Naive thymus-derived CD4-positive, alpha-beta T cell (primary cell): ENCODE measurements at regions of chr16 and their contacts with region 1.

Region 1: DNA sequence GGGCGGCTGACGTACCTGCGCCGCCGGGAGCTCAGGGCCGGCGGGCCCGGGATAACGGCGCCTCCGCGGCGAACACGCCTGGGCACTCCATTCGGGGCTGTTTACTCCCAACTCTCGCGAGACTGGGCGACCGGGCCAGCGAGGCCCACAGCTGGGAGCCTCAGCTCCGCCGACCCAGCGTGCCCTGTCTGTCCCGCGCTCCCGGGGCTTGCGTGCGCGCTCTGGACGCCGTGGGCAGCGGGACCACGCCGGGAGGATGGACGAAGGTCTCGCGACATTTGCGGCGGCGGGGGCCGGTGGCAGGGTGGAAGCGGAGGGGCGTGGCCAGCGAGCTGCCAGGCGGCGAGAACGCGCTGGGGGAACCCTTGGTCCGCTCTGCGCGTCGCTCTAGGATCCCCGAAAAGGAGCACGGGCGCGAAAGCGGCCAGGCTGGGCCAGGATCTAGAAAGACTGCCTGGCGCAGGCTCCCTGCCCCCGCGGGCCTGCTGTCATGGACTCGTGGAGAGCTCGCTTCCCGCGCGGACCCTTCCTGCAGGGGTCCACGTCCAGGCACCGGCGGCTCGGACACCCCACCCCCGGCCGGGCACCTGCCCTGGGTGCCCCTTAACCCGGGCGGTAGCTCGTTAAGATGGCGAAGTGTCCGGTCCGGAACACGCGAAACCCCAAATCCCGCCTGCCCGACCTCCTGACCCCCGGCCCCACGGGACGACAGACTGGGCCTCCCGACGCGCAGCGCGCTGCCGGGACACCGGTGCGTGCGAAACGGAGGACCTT is at the start of gene MBTPS1:
- DNase-seq: peak; percentile 94 to 99 (median 97)
- ATAC-seq: peak; percentile 92
- H3K4me3 ChIP-seq: peak within 1 kb of the TSS; percentile 99
- H3K4me3 Mint-ChIP-seq: peak within 1 kb of the TSS; percentile 90 to 96 (median 94)
- H3K27ac ChIP-seq: peak within 1 kb of the TSS; percentile 86
- H3K27ac Mint-ChIP-seq: peak within 1 kb of the TSS; percentile 93 to 98 (median 96)
- H3K4me1 ChIP-seq: peaks cover 14 to 18% of the 10 kb centered on the region in 2 donors
- H3K4me1 Mint-ChIP-seq: peaks cover 6 to 36% (median 23%) of the 10 kb centered on the region in 7 donors
- H3K27me3 ChIP-seq: no peaks in the 10 kb centered on the region
- H3K27me3 Mint-ChIP-seq: no peaks in the 10 kb centered on the region
- total RNA-seq, gene MBTPS1: 65.3 to 157 (median 138) TPM

Region 2: DNA sequence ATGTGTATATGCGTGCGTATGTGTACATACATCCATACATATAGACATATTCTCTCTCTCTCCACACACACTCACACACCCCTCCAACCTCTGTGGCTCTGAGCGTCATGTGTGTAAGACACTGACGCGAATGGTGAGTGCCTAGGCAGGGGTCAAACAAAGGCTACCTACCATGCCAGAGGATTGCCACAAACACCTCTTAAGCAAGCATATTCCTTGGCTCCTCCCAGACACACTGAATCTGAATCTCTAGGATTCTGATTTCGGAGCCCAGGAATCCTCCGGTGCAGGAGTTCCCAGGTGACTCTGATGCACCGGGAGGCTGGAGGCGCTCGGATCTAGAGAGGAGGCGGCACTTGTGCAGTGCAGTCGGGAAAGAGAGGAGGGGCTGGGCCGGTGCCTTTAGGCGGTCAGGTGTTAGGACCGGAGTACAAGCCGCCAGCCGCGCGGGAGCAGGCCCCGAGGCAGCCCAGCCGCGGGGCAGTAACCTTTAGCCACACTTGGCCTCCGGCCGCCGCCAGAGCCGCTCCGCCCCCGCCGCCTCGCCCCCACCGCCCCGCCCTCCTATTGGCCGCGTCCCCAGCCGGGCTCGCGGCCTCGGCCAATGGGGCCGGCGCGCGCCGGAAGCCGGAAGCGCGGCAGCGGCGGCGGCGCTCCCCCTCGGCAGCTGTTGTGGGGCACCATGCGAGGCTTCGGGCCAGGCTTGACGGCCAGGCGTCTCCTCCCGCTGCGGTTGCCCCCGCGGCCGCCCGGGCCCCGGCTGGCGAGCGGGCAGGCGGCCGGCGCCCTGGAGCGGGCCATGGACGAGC is 218.2 kb before region 1 on chr16 and contains the start of gene MLYCD:
- CTCF ChIA-PET with region 1: no interaction called
- POLR2A ChIA-PET with region 1: no interaction called
- intact Hi-C with region 1: loop called in 1 of 2 experiments (anchors 1 kb)
- DNase-seq: peak; percentile 59 to 82 (median 68)
- ATAC-seq: peak; percentile 96
- H3K4me3 ChIP-seq: peak within 1 kb of the TSS; percentile 61
- H3K4me3 Mint-ChIP-seq: peak within 1 kb of the TSS; percentile 86 to 100 (median 96)
- H3K27ac ChIP-seq: peak within 1 kb of the TSS; percentile 70
- H3K27ac Mint-ChIP-seq: peak within 1 kb of the TSS; percentile 65 to 96 (median 88)
- H3K4me1 ChIP-seq: peaks cover 4 to 17% of the 10 kb centered on the region in 2 donors
- H3K4me1 Mint-ChIP-seq: peaks cover 20 to 50% (median 41%) of the 10 kb centered on the region in 7 donors
- H3K27me3 ChIP-seq: peaks cover 0 to 4% of the 10 kb centered on the region in 2 donors
- H3K27me3 Mint-ChIP-seq: peaks cover 4 to 22% (median 8%) of the 10 kb centered on the region in 5 donors
- total RNA-seq, gene MLYCD: 6.6 to 11.4 (median 8.1) TPM

Region 3: DNA sequence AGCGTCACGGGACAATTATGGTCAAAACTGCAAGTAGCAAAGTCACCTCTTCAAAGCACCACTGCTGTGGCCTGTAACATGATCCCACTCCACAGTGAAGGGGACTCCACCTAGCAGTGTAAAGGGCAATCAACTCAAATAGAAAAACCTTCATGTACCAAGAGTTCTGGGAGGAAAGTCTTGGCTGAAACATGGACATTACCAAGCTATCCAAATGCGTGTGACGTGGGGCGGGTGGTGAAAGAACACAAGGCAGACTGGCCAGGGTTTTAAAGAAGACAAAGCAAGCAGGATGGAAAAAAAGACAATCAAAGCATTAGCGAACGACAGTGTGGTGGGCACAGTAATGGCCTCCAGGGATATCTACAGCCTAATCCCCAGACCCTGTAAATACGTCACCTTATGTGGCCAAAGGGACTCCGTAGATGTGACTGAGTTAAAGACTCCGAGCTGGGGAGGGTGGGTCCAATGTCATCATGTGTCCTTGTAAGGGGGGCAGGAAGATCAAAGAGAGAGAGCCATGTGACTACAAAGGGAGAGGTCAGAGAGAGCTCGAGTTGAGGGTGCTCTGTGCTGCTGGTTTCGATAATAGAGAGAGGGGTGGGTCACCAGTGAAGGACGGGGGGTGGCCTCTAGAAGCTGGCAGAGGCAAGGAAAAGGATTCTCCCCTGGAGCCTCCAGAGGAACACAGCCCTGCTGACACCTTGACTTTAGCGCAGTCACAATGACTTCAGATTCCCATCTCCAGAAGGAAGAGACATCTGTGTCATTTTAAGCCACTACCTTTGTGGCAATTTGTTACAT is 22.1 kb after region 1 on chr16:
- CTCF ChIA-PET with region 1: interaction called, 3 read pairs
- POLR2A ChIA-PET with region 1: interaction called, 21 read pairs
- intact Hi-C with region 1: no loop called
- DNase-seq: peak in 1 of 9 donors; percentile 28
- ATAC-seq: no peak
- H3K4me3 ChIP-seq: no peak overlapping the region
- H3K4me3 Mint-ChIP-seq: peak overlapping the region in 2 of 10 donors; percentile 8 to 56
- H3K27ac ChIP-seq: no peak overlapping the region
- H3K27ac Mint-ChIP-seq: peak overlapping the region in 3 of 9 donors; percentile 11 to 35 (median 23)
- H3K4me1 ChIP-seq: peaks cover 2 to 7% of the 10 kb centered on the region in 2 donors
- H3K4me1 Mint-ChIP-seq: peaks cover 24 to 61% (median 49%) of the 10 kb centered on the region in 7 donors
- H3K27me3 ChIP-seq: no peaks in the 10 kb centered on the region
- H3K27me3 Mint-ChIP-seq: peaks cover 0 to 4% (median 0%) of the 10 kb centered on the region in 5 donors

Region 4: GRCh38 chr16:84175350-84176081 is 58.6 kb after region 1 on chr16:
- CTCF ChIA-PET with region 1: no interaction called
- POLR2A ChIA-PET with region 1: no interaction called
- intact Hi-C with region 1: loop called in 1 of 2 experiments (anchors 1 kb)
- DNase-seq: peak in 7 of 9 donors; percentile 26 to 63 (median 37)
- ATAC-seq: peak; percentile 86
- H3K4me3 ChIP-seq: no peak overlapping the region
- H3K4me3 Mint-ChIP-seq: no peak overlapping the region
- H3K27ac ChIP-seq: no peak overlapping the region
- H3K27ac Mint-ChIP-seq: peak overlapping the region in 7 of 9 donors; percentile 5 to 79 (median 39)
- H3K4me1 ChIP-seq: no peaks in the 10 kb centered on the region
- H3K4me1 Mint-ChIP-seq: peaks cover 4 to 6% (median 6%) of the 10 kb centered on the region in 7 donors
- H3K27me3 ChIP-seq: no peaks in the 10 kb centered on the region
- H3K27me3 Mint-ChIP-seq: peaks cover 0 to 4% (median 0%) of the 10 kb centered on the region in 5 donors

Region 5: DNA sequence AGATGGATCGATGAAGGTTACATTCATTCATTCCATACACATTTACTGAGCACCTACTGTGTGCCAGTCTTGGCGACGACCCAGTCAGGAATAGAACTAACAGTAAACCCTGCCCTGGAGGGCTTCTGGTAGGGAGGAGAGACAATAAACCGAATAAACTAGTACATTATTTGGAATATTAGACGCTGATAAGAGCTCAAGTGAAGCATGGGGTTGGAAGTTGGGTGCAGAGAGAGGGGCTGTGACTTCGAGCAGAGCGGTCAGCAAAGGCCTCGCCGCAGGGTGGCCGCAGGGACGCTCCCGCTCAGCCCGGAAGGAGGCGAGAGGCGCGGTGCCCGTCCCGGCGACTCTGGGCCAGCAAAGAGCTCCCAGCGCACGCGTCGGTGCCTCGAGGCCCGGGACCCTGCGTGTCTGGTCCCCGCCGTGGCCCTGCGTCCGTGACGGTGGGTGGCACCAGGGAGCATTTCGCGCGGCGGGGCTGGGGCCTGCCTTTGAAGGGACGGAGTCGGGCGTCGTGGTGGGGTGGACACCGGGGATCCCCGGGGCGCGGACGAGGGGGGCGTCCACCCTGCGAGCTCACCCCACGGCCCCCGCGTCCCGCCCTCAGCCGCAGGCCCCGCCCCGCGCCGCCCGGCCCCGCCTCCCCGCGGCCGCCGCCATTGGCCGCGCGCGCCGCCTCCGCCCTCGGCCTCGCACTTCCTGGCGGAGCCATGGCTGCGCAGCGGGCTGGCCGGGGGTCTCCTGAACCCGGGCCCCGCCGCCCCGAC is 531.1 kb after region 1 on chr16 and contains the start of gene KLHL36:
- CTCF ChIA-PET with region 1: no interaction called
- POLR2A ChIA-PET with region 1: no interaction called
- intact Hi-C with region 1: loop called in 1 of 2 experiments (anchors 5 kb)
- DNase-seq: peak; percentile 59 to 89 (median 70)
- ATAC-seq: peak; percentile 92
- H3K4me3 ChIP-seq: peak within 1 kb of the TSS; percentile 73
- H3K4me3 Mint-ChIP-seq: peak within 1 kb of the TSS; percentile 86 to 98 (median 93)
- H3K27ac ChIP-seq: peak within 1 kb of the TSS; percentile 81
- H3K27ac Mint-ChIP-seq: peak within 1 kb of the TSS; percentile 85 to 99 (median 92)
- H3K4me1 ChIP-seq: peaks cover 19 to 41% of the 10 kb centered on the region in 2 donors
- H3K4me1 Mint-ChIP-seq: peaks cover 38 to 54% (median 49%) of the 10 kb centered on the region in 7 donors
- H3K27me3 ChIP-seq: no peaks in the 10 kb centered on the region
- H3K27me3 Mint-ChIP-seq: peaks cover 0 to 35% (median 0%) of the 10 kb centered on the region in 5 donors
- total RNA-seq, gene KLHL36: 51.8 to 161 (median 97.8) TPM